ENCODE measurements at regions of chr19 and their contacts with region 1.

Region 1: DNA sequence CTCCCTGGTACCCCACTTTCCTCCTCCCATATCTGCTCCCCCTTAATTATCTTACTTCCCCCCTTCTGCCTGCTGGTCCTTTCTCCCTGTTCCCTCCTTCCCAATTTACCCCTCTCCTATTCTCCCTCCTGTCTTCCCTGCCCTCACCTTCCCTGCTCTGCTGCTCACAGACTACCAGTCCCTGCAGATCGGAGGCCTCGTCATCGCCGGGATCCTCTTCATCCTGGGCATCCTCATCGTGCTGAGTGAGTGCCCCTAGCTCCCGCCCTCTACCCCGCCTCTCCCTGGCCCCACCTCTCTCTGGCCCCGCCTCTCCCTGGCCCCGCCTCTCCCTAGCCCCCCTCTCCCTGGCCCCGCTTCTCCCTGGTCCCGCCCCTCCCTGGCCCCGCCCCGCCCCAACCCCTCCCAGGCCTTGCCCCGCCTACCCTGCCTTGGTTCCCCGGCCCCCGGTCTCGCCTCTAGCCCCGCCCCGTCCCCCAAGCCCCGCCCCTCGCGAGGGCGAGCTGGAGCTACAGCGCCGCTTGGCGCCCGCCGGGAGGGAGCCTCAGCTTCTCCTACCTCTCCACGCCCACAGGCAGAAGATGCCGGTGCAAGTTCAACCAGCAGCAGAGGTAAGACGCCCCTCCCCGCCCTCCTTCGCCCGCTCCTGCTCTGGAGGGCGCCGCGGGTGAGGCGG is 2.0 kb upstream of the FXYD7 start:
- DNase-seq: peak; percentile 91 to 99 (median 96)
- ATAC-seq: peak; percentile 87
- H3K4me3 ChIP-seq: peak overlapping the region; percentile 42
- H3K4me3 Mint-ChIP-seq: peak overlapping the region; percentile 90
- H3K27ac ChIP-seq: no peak overlapping the region
- H3K27ac Mint-ChIP-seq: peak overlapping the region; percentile 79
- H3K4me1 ChIP-seq: peaks cover 54% of the 10 kb centered on the region
- H3K4me1 Mint-ChIP-seq: peaks cover 43% of the 10 kb centered on the region
- H3K27me3 ChIP-seq: no peaks in the 10 kb centered on the region
- H3K27me3 Mint-ChIP-seq: no peaks in the 10 kb centered on the region
- CTCF ChIP-seq: no peak

Region 2: GRCh38 chr19:34974646-34975045 is 166.5 kb before region 1 on chr19:
- CTCF ChIA-PET with region 1: no interaction called
- POLR2A ChIA-PET with region 1: no interaction called
- intact Hi-C with region 1: loop called (anchors 5 to 10 kb)
- DNase-seq: peak in 1 of 14 experiments; percentile 37
- ATAC-seq: no peak
- H3K4me3 ChIP-seq: no peak overlapping the region
- H3K4me3 Mint-ChIP-seq: no peak overlapping the region
- H3K27ac ChIP-seq: no peak overlapping the region
- H3K27ac Mint-ChIP-seq: peak overlapping the region; percentile 18
- H3K4me1 ChIP-seq: peaks cover 21% of the 10 kb centered on the region
- H3K4me1 Mint-ChIP-seq: peaks cover 22% of the 10 kb centered on the region
- H3K27me3 ChIP-seq: no peaks in the 10 kb centered on the region
- H3K27me3 Mint-ChIP-seq: no peaks in the 10 kb centered on the region
- CTCF ChIP-seq: no peak

Region 3: DNA sequence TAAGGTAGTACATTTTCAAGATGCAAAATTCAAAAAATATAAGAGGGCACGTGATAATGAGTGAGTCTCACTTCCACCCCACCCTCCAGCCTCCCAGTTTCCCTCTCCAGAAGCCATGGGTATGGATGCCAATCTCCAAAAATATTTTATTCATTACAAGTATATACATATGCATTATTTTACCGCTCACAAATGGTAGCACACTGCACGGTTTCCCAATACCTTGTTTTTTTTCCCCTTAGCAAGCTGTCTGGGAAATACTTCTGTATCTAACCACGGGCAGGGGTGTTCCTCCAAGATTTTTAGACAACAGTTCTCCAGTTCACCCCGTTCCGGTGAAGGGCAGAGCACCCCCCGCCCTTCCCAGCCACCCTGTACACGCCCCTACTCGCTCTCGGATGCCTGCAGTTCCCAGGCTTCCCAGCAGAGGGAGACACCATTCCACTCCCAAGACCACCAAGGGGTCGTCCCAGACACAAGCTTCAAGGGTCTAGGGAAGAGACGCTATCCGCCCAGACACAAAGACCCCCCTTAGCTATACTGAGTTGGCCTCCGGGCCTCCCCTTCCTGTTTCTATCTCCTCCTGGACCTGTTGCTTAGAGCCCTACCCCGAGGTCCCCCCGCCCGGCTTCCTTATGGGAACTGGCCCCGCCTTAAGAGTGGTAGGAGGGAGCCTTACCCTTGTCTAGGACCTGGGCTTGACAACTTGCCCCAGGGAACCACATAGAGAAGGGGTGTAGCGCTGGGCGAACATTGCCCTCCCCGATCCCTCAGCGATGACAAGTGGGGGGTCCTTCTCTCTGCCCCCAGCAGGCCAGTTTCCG is 26.5 kb before region 1 on chr19:
- CTCF ChIA-PET with region 1: interaction called, 13 read pairs
- POLR2A ChIA-PET with region 1: no interaction called
- intact Hi-C with region 1: no loop called
- DNase-seq: peak; percentile 54 to 82 (median 64)
- ATAC-seq: peak; percentile 95
- H3K4me3 ChIP-seq: no peak overlapping the region
- H3K4me3 Mint-ChIP-seq: no peak overlapping the region
- H3K27ac ChIP-seq: no peak overlapping the region
- H3K27ac Mint-ChIP-seq: no peak overlapping the region
- H3K4me1 ChIP-seq: peaks cover 8% of the 10 kb centered on the region
- H3K4me1 Mint-ChIP-seq: peaks cover 6% of the 10 kb centered on the region
- H3K27me3 ChIP-seq: peaks cover 0 to under 1% of the 10 kb centered on the region in 2 experiments
- H3K27me3 Mint-ChIP-seq: no peaks in the 10 kb centered on the region
- CTCF ChIP-seq: peak; percentile 84

Region 4: GRCh38 chr19:35154525-35155406 is 13.7 kb after region 1 on chr19 and contains the start of gene FXYD5:
- CTCF ChIA-PET with region 1: interaction called, 46 read pairs
- POLR2A ChIA-PET with region 1: interaction called, 31 read pairs
- intact Hi-C with region 1: loop called in 1 of 2 experiments (anchors 2 kb)
- DNase-seq: peak; percentile 49 to 82 (median 71)
- ATAC-seq: peak; percentile 75
- H3K4me3 ChIP-seq: peak within 1 kb of the TSS; percentile 99
- H3K4me3 Mint-ChIP-seq: peak within 1 kb of the TSS; percentile 98
- H3K27ac ChIP-seq: peak within 1 kb of the TSS; percentile 80 to 89
- H3K27ac Mint-ChIP-seq: peak within 1 kb of the TSS; percentile 98
- H3K4me1 ChIP-seq: peaks cover 55% of the 10 kb centered on the region
- H3K4me1 Mint-ChIP-seq: peaks cover 71% of the 10 kb centered on the region
- H3K27me3 ChIP-seq: no peaks in the 10 kb centered on the region
- H3K27me3 Mint-ChIP-seq: no peaks in the 10 kb centered on the region
- CTCF ChIP-seq: no peak
- total RNA-seq, gene FXYD5: 587 to 615 TPM

Region 5: DNA sequence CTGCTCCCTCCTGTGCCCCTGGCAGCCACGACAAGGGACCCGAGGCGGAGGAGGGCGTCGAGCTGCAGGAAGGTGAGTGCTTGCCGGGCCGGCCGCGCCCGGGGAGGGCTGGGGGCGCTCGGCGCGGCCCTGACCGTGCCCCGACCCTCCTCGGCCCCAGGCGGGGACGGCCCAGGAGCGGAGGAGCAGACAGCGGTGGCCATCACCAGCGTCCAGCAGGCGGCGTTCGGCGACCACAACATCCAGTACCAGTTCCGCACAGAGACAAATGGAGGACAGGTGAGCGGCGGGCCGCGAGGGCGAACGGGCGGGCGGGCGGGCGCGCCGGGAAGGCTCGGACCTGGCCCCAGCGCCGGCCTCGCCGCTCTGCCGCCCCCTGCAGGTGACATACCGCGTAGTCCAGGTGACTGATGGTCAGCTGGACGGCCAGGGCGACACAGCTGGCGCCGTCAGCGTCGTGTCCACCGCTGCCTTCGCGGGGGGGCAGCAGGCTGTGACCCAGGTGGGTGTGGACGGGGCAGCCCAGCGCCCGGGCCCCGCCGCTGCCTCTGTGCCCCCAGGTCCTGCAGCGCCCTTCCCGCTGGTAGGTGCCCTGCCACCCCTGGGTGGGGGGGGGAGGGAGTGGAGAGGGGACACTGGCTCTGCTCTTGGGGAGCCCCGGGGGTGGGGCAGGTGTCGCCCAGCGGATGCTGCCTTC is 128.5 kb after region 1 on chr19:
- CTCF ChIA-PET with region 1: interaction called, 4 read pairs
- POLR2A ChIA-PET with region 1: interaction called, 20 read pairs
- intact Hi-C with region 1: loop called (anchors 2 to 5 kb)
- DNase-seq: peak; percentile 63 to 90 (median 74)
- ATAC-seq: peak; percentile 46
- H3K4me3 ChIP-seq: peak overlapping the region; percentile 32
- H3K4me3 Mint-ChIP-seq: peak overlapping the region; percentile 83
- H3K27ac ChIP-seq: peak overlapping the region in 1 of 2 donors; percentile 65
- H3K27ac Mint-ChIP-seq: peak overlapping the region; percentile 81
- H3K4me1 ChIP-seq: peaks cover 54% of the 10 kb centered on the region
- H3K4me1 Mint-ChIP-seq: peaks cover 41% of the 10 kb centered on the region
- H3K27me3 ChIP-seq: no peaks in the 10 kb centered on the region
- H3K27me3 Mint-ChIP-seq: no peaks in the 10 kb centered on the region
- CTCF ChIP-seq: peak; percentile 77

Measured in CD4-positive, alpha-beta T cell (primary cell).